ENCODE measurements at regions of chr13 and their contacts with region 1.

Region 1: DNA sequence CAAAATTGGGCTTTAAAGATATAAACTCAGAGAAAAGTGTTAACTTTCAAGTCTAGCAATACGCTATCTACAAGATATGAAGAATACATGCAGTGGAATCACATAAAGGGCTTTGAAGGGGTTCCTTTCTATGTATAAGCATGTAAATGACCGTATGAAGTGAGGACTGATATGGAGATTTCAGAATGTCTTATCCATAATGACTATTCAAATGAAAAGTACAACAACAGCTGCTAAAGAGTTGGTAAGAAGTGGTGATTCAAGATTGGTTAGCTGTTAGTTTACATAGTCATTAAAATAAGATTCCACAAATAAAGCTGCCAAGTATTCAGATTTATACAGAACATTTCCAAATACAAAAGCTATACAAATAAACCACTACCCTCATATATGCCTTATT is 153.4 kb upstream of the STARD13 start:
- DNase-seq: no peak
- ATAC-seq: no peak
- H3K4me3 ChIP-seq: no peak overlapping the region
- H3K27ac ChIP-seq: no peak overlapping the region
- H3K4me1 ChIP-seq: no peaks in the 10 kb centered on the region
- H3K27me3 ChIP-seq: no peaks in the 10 kb centered on the region
- CTCF ChIP-seq: no peak
- POLR2A ChIP-seq: no peak

Region 2: DNA sequence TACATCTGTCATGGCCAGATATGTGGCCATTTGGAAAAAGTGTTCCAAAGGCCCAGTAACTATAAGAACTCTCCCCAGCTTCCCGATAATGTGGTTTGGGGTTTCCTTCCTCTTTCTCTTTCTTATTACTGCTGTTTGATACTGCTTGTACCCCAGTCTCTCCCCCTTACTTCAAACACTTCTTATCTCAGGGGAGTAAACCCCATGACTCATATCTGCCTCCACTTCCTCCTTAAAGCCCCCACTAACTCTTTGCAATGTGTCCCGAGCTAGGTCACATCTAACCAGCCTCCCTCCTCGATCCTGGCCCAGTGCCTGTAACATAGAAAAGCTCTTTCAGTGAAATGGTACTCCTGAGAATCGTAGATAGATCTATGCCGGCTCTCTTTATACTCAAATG is 71.0 kb before region 1 on chr13:
- intact Hi-C with region 1: loop called in 1 of 10 experiments (anchors 10 kb)
- DNase-seq: no peak
- ATAC-seq: peak in 2 of 4 donors; percentile 29 to 48
- H3K4me3 ChIP-seq: no peak overlapping the region
- H3K27ac ChIP-seq: peak overlapping the region in 3 of 12 donors; percentile 10 to 48 (median 23)
- H3K4me1 ChIP-seq: peaks cover 0 to 26% (median 0%) of the 10 kb centered on the region in 12 donors
- H3K27me3 ChIP-seq: no peaks in the 10 kb centered on the region
- CTCF ChIP-seq: no peak
- POLR2A ChIP-seq: no peak

Measured in heart left ventricle (tissue), 16 donors.